ENCODE measurements at regions of chr1 and their contacts with region 1.

Region 1: DNA sequence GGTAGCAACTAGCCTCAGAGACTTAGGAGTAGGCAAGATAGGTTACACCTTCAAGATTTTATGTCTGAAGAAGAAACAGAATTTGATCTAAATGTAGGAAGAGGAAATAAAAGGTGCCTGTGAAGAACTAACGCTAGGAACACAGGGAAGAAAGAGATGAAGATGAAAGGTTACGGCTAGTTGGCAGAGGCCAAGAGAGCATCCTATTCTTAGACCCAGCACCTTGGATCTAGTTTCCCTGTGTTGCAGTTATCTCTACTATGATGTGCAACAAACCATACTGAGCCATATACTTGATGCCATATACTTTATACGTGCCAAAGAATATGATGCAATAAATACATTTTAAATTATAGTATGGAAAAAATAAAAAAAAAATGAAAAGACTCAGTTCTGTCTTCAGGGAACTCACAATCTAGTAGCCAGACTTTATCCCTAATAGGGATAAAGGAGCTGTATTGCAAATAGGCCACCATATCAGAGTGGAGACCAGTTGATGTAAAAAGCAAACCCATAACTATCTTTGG is 181.1 kb downstream of the PBX1 start:
- DNase-seq: no peak
- ATAC-seq: peak in 2 of 8 donors; percentile 53
- H3K4me3 ChIP-seq: no peak overlapping the region
- H3K27ac ChIP-seq: no peak overlapping the region
- H3K4me1 ChIP-seq: peaks cover 0 to 15% (median 8%) of the 10 kb centered on the region in 9 donors
- H3K27me3 ChIP-seq: no peaks in the 10 kb centered on the region
- CTCF ChIP-seq: no peak

Region 2: GRCh38 chr1:164772635-164773034 is 32.6 kb after region 1 on chr1:
- intact Hi-C with region 1: loop called in 1 of 10 experiments (anchors 1 kb)
- DNase-seq: peak; percentile 45 to 55
- ATAC-seq: peak; percentile 66 to 94 (median 86)
- H3K4me3 ChIP-seq: no peak overlapping the region
- H3K27ac ChIP-seq: peak overlapping the region in 9 of 10 donors; percentile 1 to 73 (median 57)
- H3K4me1 ChIP-seq: peaks cover 9 to 77% (median 48%) of the 10 kb centered on the region in 9 donors
- H3K27me3 ChIP-seq: no peaks in the 10 kb centered on the region
- CTCF ChIP-seq: no peak

Region 3: DNA sequence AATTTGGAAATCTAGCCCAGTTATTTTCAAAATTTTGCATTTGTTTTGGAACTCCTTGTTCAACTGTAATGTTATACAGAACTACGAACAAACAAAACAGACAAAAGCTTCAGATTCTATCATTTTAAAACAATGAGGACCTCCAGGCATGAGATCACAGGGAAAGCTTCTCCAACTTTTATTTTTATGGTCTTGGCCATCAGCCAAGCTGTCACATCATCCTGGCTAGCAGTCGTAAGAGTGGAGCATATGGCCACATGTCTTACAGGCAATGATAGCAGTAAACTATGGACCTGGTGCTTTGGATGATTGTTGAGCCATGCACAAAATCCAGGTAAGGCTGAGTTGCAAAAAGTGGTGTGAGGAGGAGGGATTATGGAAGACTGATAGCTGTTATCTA is 316.9 kb after region 1 on chr1:
- intact Hi-C with region 1: no loop called
- DNase-seq: no peak
- ATAC-seq: no peak
- H3K4me3 ChIP-seq: no peak overlapping the region
- H3K27ac ChIP-seq: no peak overlapping the region
- H3K4me1 ChIP-seq: peaks cover 0 to 4% (median 0%) of the 10 kb centered on the region in 9 donors
- H3K27me3 ChIP-seq: no peaks in the 10 kb centered on the region
- CTCF ChIP-seq: no peak

Measured in heart right ventricle (tissue), 16 donors.